WTC11 (cell line): ENCODE measurements at regions of chr15 and their contacts with region 1.

Region 1: GRCh38 chr15:59741274-59741906 is 52.3 kb upstream of the BNIP2 start:
- DNase-seq: peak; percentile 33
- ATAC-seq: peak; percentile 91
- H3K4me3 Mint-ChIP-seq: no peak overlapping the region
- H3K27ac Mint-ChIP-seq: no peak overlapping the region
- H3K4me1 Mint-ChIP-seq: no peaks in the 10 kb centered on the region
- H3K27me3 Mint-ChIP-seq: peaks cover 8% of the 10 kb centered on the region; the same call in 1 of the 2 replicates
- CTCF ChIP-seq: no peak

Region 2: DNA sequence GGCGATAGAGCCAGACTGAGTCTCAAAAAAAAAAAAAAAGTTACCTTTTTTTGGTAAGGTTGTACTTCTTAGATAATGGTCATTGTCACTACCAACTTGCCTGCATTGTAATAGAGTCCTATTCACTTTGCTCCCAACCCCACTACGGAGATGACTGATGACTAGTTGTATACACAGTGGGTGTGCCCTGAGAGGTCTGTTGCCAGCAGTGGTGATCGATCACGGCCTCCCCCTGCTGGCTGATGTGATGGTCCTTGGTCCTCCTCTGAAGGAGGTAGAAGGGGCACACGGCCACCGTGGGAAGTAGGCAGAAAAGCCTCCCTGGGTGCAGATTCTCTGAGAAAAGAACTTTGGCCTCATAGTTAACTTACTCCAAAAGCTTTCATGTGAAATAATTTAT is 119.1 kb before region 1 on chr15:
- CTCF ChIA-PET with region 1: no interaction called
- POLR2A ChIA-PET with region 1: no interaction called
- DNase-seq: peak; percentile 69
- ATAC-seq: peak; percentile 97
- H3K4me3 Mint-ChIP-seq: no peak overlapping the region
- H3K27ac Mint-ChIP-seq: no peak overlapping the region
- H3K4me1 Mint-ChIP-seq: no peaks in the 10 kb centered on the region; the same call in 1 of the 2 replicates
- H3K27me3 Mint-ChIP-seq: peaks cover 7% of the 10 kb centered on the region
- CTCF ChIP-seq: no peak; the same call in 1 of the 2 replicates

Region 3: GRCh38 chr15:59725172-59725486 is 16.3 kb before region 1 on chr15:
- CTCF ChIA-PET with region 1: interaction called, 10 read pairs
- POLR2A ChIA-PET with region 1: no interaction called
- DNase-seq: no peak
- ATAC-seq: no peak
- H3K4me3 Mint-ChIP-seq: no peak overlapping the region
- H3K27ac Mint-ChIP-seq: no peak overlapping the region
- H3K4me1 Mint-ChIP-seq: no peaks in the 10 kb centered on the region
- H3K27me3 Mint-ChIP-seq: no peaks in the 10 kb centered on the region
- CTCF ChIP-seq: no peak

Region 4: GRCh38 chr15:59751552-59752413 is 10.4 kb after region 1 on chr15:
- CTCF ChIA-PET with region 1: interaction called, 18 read pairs
- POLR2A ChIA-PET with region 1: no interaction called
- DNase-seq: no peak
- ATAC-seq: peak; percentile 100
- H3K4me3 Mint-ChIP-seq: no peak overlapping the region
- H3K27ac Mint-ChIP-seq: no peak overlapping the region
- H3K4me1 Mint-ChIP-seq: no peaks in the 10 kb centered on the region; the same call in none of the 2 replicates
- H3K27me3 Mint-ChIP-seq: no peaks in the 10 kb centered on the region
- CTCF ChIP-seq: peak; percentile 30; the same call in 1 of the 2 replicates

Region 5: DNA sequence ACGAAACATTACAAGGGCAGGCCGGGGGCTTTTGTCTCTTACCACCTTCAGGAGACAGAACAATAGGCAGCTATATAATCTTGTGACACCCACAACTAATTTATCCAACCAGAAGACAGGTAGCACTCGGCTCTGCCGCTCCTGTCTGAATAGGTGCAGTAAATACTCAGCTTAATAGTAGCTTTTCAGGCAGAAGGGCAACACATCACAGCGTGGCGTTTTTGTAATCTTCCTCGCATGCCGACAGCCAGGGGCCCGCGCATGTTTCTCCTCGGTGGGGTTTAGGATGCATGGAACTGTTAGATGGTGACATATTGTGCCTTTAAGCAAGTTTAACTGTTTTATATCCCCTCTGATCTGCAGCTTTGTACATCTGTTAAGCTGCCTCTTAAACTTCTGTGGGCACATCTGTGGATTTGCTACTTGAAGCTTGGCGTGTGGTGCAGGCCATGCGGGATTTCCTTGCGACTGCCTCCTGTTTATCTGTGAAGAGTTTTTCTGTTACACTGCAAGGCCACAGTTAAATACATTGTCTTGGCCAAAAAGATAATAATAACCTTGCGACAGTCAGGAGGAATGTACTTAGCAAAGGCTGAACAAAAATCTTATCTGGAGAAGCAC is 71.0 kb after region 1 on chr15:
- CTCF ChIA-PET with region 1: no interaction called
- POLR2A ChIA-PET with region 1: no interaction called
- DNase-seq: no peak
- ATAC-seq: peak; percentile 39
- H3K4me3 Mint-ChIP-seq: no peak overlapping the region
- H3K27ac Mint-ChIP-seq: no peak overlapping the region
- H3K4me1 Mint-ChIP-seq: peaks cover 12% of the 10 kb centered on the region
- H3K27me3 Mint-ChIP-seq: no peaks in the 10 kb centered on the region
- CTCF ChIP-seq: no peak